K562 (cell line): ENCODE measurements at regions of chrX and their contacts with region 1.

Region 1: GRCh38 chrX:119145241-119145653 is 17.6 kb upstream of the KIAA1210 start:
- DNase-seq: peak in 2 of 4 experiments; percentile 11 to 23
- ATAC-seq: peak; percentile 57; the same call in 2 of the 3 replicates
- H3K4me3 ChIP-seq: no peak overlapping the region
- H3K27ac ChIP-seq: no peak overlapping the region
- H3K4me1 ChIP-seq: no peaks in the 10 kb centered on the region
- H3K27me3 ChIP-seq: peaks cover 2 to 20% of the 10 kb centered on the region in 2 experiments; a peak in 3 of 5 replicates
- CTCF ChIP-seq: peak; percentile 48 to 68 (median 53)
- EP300 ChIP-seq: no peak
- POLR2A ChIP-seq: no peak
- RAD21 ChIP-seq: peak; percentile 66 to 67

Region 2: DNA sequence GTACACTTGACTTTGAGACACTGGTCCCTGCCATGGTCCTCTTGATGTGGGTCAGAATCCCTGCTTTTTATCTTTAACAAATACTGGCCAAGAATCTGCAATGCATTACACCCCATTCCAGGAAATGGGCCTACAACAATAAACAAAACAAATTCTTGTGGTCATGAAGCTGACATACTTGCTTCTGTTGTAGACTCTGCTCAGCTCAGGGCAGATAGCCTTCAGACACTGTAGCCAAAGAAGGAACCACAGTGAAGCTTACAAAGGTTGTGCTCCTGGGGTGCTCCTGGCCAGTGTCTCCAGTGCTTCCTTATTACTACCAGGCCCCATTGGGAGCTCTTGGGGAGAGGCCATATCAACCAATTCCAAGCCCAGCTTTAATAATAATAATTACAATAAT is 39.4 kb before region 1 on chrX:
- CTCF ChIA-PET with region 1: no interaction called
- POLR2A ChIA-PET with region 1: no interaction called
- in situ Hi-C with region 1: no loop called
- intact Hi-C with region 1: no loop called
- DNase-seq: no peak
- ATAC-seq: no peak
- H3K4me3 ChIP-seq: no peak overlapping the region
- H3K27ac ChIP-seq: no peak overlapping the region
- H3K4me1 ChIP-seq: no peaks in the 10 kb centered on the region
- H3K27me3 ChIP-seq: no peaks in the 10 kb centered on the region
- CTCF ChIP-seq: no peak
- EP300 ChIP-seq: no peak
- POLR2A ChIP-seq: no peak
- RAD21 ChIP-seq: no peak

Region 3: GRCh38 chrX:119194621-119195020 is 49.4 kb after region 1 on chrX:
- CTCF ChIA-PET with region 1: no interaction called
- POLR2A ChIA-PET with region 1: interaction called, 3 read pairs
- in situ Hi-C with region 1: no loop called
- intact Hi-C with region 1: loop called (anchors 1 kb)
- DNase-seq: peak in 1 of 4 experiments; percentile 21
- ATAC-seq: peak; percentile 58; the same call in 2 of the 3 replicates
- H3K4me3 ChIP-seq: no peak overlapping the region
- H3K27ac ChIP-seq: no peak overlapping the region
- H3K4me1 ChIP-seq: no peaks in the 10 kb centered on the region
- H3K27me3 ChIP-seq: peaks cover 0 to 4% of the 10 kb centered on the region in 2 experiments; a peak in 3 of 5 replicates
- CTCF ChIP-seq: peak in 2 of 3 experiments; percentile 45 to 52; a peak in 2 of 6 replicates
- EP300 ChIP-seq: no peak
- POLR2A ChIP-seq: no peak
- RAD21 ChIP-seq: peak; percentile 44 to 62

Region 4: DNA sequence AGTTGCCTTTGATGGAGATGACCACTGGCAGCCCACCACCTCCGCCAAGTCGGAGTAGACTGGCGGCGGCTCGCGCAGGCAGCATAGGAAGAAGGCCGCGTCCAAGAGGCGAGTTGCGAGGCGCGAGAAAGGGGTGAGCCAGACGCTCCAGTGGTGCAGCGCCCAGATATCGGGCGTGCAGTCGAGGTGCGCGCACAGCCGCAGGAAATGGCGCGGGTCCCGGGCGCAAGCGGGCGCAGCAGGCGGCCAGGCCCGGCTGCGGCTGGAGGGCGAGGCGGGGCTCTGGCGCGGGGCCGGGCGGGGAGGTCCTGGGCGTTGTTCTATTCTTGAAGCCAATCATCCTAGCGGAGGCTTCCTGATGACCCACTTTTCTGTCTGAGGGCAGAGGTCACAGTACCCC is 77.7 kb after region 1 on chrX:
- CTCF ChIA-PET with region 1: interaction called, 4 read pairs
- POLR2A ChIA-PET with region 1: no interaction called
- in situ Hi-C with region 1: no loop called
- intact Hi-C with region 1: loop called (anchors 1 kb)
- DNase-seq: no peak
- ATAC-seq: no peak
- H3K4me3 ChIP-seq: no peak overlapping the region
- H3K27ac ChIP-seq: no peak overlapping the region
- H3K4me1 ChIP-seq: no peaks in the 10 kb centered on the region
- H3K27me3 ChIP-seq: no peaks in the 10 kb centered on the region; a peak in 2 of 5 replicates
- CTCF ChIP-seq: no peak
- EP300 ChIP-seq: no peak
- POLR2A ChIP-seq: no peak
- RAD21 ChIP-seq: no peak

Region 5: GRCh38 chrX:119266364-119266995 is 121.2 kb after region 1 on chrX:
- CTCF ChIA-PET with region 1: no interaction called
- POLR2A ChIA-PET with region 1: no interaction called
- in situ Hi-C with region 1: no loop called
- intact Hi-C with region 1: loop called (anchors 1 kb)
- DNase-seq: peak; percentile 27 to 37 (median 28)
- ATAC-seq: peak; percentile 77
- H3K4me3 ChIP-seq: no peak overlapping the region
- H3K27ac ChIP-seq: no peak overlapping the region
- H3K4me1 ChIP-seq: no peaks in the 10 kb centered on the region
- H3K27me3 ChIP-seq: peaks cover 0 to 13% of the 10 kb centered on the region in 2 experiments; a peak in 2 of 5 replicates
- CTCF ChIP-seq: peak; percentile 63 to 76 (median 69)
- EP300 ChIP-seq: no peak
- POLR2A ChIP-seq: no peak
- RAD21 ChIP-seq: peak; percentile 21 to 55; a peak in 3 of 4 replicates